Activated T-helper 2 cell treated with anti-CD3 and anti-CD28 coated beads, Interferon-gamma antibody, Interleukin-2, Interleukin-4, amounts not matched to agents 10 μg/mL and 5 μg/mL and 100 μg/mL, durations not matched to agents 14 hours and 24 hours and 36 hours (primary cell): ENCODE measurements at regions of chr19 and their contacts with region 1.

Region 1: DNA sequence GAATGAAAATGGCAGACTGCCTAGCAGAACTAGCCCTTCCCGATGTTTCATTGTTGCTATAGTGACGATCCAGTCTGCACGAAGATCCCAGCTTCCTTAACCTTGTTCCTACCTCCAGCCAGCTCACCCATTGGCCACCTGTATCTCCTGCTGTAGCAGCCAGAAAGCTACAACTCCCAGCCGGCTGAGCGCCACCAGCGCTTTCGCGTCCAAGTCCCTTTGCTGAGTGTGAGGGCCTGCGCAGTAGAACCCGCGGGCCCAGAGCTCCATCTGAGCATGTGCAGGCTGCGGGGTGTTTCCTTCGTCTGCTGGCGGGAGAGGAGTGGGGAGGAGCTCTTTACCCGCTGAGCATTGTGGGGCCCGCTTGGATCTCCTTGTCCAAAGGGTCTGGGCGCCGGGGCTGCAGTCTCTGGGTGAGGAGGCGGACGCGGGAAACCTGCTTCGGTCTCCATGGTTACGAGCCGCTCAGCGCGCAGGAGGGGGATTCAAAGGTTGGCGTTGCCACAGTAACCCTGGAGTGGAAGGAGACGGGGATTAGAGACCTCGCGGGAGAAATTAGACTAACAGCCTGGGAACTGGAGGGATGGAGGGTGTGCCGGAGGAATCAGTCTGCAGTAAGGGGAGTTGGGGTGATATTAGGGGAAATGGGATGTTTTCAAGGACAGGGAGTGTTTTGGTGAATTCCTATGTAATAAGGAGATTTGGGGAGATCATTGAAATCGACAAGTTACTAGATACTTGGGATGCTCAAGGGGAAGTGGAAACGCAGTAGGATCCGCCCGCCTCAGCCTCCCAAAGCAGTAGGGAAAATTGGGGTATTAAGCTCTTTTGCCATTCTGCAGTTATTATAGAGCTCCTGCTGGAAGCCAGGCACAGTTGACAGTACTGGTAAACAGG is 33.5 kb downstream of the ZSWIM9 start:
- DNase-seq: peak; percentile 92
- H3K4me3 Mint-ChIP-seq: no peak overlapping the region
- H3K27ac Mint-ChIP-seq: no peak overlapping the region
- H3K4me1 Mint-ChIP-seq: peaks cover 7% of the 10 kb centered on the region
- H3K27me3 Mint-ChIP-seq: no peaks in the 10 kb centered on the region

Region 2: DNA sequence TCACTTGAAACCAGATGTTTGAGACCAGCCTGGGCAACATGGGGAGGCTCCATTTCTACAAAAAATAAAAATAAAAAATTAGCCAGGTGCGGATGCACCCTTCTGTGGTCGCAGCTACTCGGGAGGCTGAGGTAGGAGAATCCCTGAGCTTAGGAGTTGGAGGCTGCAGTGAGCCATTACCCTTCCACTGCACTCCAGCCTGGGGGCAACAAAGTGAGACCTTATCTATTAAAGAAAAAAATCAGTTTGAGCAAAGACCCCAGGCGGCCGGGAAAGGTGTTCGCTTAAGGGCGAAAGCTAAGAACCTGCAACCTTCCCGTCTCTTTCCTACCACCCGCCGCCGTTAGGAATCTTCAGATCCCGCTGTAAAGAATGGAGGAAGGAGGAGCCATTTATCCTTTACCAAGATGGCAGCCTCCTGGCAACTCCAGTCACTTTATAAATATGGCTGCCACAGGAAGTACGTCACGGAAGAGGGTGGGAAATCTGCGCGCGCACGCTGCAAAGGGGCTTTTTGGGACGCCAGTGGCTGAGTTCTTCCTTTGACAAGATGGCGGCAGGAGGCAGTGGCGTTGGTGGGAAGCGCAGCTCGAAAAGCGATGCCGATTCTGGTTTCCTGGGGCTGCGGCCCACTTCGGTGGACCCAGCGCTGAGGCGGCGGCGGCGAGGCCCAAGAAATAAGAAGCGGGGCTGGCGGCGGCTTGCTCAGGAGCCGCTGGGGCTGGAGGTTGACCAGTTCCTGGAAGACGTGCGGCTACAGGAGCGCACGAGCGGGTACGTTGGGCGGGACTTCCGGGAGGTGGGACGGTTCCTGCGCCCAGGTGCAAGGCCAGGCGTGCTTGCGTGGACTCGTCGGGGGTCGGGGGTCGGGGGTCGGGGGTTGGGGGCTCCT is 458.7 kb before region 1 on chr19 and contains the start of gene NOP53:
- intact Hi-C with region 1: no loop called
- DNase-seq: peak; percentile 95
- H3K4me3 Mint-ChIP-seq: peak within 1 kb of the TSS; percentile 99
- H3K27ac Mint-ChIP-seq: peak within 1 kb of the TSS; percentile 98
- H3K4me1 Mint-ChIP-seq: peaks cover 26% of the 10 kb centered on the region
- H3K27me3 Mint-ChIP-seq: no peaks in the 10 kb centered on the region
- total RNA-seq, gene NOP53: 266 and 269 TPM in 2 replicates

Region 3: DNA sequence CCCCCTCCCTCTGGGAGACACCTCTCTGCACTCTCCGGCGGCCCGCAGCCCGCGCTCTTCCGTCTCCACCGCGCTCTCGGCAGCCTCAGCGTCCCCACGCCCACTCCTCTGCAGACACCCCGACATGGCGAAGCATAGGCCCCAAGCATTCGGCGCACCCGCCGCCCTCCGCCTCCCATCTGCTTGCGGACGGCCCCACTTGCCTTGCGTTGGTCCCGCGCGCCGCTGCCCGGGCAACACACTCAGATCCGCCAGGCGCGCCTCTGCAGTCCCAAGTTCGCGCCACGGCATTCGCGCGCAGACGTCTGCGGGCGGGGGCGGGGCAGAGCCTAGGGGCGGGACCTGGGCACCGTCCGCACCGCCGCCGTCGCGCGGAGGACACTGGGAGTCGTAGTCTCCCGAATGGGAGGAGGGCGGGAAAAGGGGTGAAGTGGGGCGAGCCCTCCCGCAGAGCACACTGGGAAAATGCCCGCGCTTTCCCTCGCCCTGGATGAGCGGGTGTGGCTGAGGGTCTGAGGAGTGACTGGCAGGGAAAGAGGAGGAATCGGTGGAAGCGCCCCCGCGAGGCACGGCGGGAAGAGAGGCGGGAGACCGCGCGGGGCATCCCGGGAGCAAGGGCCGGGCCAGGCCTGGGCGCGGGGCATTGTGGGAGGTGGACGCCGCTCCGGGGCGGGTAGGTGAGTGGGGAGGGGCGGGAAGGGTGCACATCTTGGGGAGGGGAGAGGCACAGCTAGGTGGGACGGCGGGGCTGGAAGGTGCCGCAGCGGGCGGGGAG is 33.8 kb before region 1 on chr19 and contains the starts of genes LIG1 and ZSWIM9:
- intact Hi-C with region 1: loop called (anchors 2 kb)
- DNase-seq: peak; percentile 90
- H3K4me3 Mint-ChIP-seq: peak within 1 kb of the TSS; percentile 90
- H3K27ac Mint-ChIP-seq: peak within 1 kb of the TSS; percentile 93
- H3K4me1 Mint-ChIP-seq: peaks cover 25% of the 10 kb centered on the region
- H3K27me3 Mint-ChIP-seq: no peaks in the 10 kb centered on the region
- total RNA-seq, gene LIG1: 119 and 125 TPM in 2 replicates
- total RNA-seq, gene ZSWIM9: 9.2 and 9.7 TPM in 2 replicates

Region 4: DNA sequence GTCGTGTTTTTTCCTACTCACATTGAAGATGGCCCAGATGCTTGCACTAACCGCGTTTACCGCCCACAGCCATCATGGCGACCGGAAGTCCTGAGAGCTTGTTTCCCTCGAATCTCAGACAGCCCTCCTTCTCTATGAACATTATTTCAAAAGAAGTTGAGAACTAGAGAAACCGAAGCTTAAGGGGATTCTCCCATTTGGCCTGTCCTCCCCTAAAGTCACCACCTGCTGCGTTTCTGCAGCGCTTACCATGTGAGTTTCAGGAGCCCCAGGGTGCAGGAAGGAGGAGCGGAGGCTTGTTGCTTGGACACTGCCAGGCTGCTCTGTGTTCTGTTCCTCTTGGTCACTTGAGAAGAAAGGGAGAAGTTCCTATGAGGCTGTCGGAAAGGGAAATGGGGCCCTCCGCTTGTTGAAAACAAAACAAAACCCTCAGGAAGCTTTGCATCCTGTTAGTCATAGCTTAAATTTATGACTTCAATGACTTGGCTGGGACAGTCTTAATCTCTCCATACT is 45.6 kb after region 1 on chr19:
- intact Hi-C with region 1: loop called (anchors 2 kb)
- DNase-seq: peak; percentile 67
- H3K4me3 Mint-ChIP-seq: peak overlapping the region; percentile 93
- H3K27ac Mint-ChIP-seq: peak overlapping the region; percentile 99
- H3K4me1 Mint-ChIP-seq: peaks cover 79% of the 10 kb centered on the region
- H3K27me3 Mint-ChIP-seq: no peaks in the 10 kb centered on the region